ENCODE measurements at regions of chr11 and their contacts with region 1.

Region 1: GRCh38 chr11:67082035-67082791 is 25.6 kb downstream of the RHOD start:
- DNase-seq: no peak
- H3K4me3 ChIP-seq: peak overlapping the region in 1 of 4 donors; percentile 25
- H3K27ac ChIP-seq: no peak overlapping the region
- H3K4me1 ChIP-seq: peaks cover 8 to 13% (median 10%) of the 10 kb centered on the region in 4 donors
- H3K27me3 ChIP-seq: peaks cover 0 to 15% (median 0%) of the 10 kb centered on the region in 4 donors
- CTCF ChIP-seq: no peak
- EP300 ChIP-seq: no peak
- POLR2A ChIP-seq: no peak

Region 2: DNA sequence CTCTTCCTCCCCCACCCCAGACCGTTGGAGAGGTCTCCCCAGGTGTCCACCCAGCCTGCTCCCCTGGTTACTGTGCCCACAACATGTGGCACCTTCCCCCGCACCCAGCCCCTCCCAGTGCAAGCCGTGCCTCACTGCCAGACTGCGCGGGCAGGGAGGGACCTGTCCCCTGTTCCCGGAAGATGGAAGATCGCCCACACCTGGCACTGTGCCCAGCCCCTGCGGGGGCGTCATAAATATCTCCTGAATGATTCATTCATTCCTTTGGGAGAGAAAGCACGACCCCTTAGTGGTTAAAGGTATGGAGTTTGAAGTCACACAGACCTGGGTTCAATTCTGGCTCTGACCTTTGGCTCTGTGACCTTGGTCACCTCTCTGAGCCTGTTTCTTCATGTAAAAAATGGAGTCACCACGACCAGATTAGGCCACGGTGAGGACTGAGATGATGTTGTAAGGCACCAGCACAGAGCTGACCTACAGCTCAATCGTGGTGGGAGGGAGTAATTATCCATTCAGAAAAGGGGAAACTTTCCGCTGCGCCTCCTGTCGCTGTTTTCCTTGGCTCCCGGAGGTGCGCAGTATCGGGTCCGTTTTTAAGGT is 59.8 kb before region 1 on chr11:
- intact Hi-C with region 1: no loop called
- DNase-seq: no peak
- H3K4me3 ChIP-seq: peak overlapping the region; percentile 47 to 58 (median 50)
- H3K27ac ChIP-seq: no peak overlapping the region
- H3K4me1 ChIP-seq: peaks cover 13 to 20% (median 19%) of the 10 kb centered on the region in 4 donors
- H3K27me3 ChIP-seq: peaks cover 0 to 40% (median 12%) of the 10 kb centered on the region in 4 donors
- CTCF ChIP-seq: no peak
- EP300 ChIP-seq: no peak
- POLR2A ChIP-seq: no peak

Region 3: DNA sequence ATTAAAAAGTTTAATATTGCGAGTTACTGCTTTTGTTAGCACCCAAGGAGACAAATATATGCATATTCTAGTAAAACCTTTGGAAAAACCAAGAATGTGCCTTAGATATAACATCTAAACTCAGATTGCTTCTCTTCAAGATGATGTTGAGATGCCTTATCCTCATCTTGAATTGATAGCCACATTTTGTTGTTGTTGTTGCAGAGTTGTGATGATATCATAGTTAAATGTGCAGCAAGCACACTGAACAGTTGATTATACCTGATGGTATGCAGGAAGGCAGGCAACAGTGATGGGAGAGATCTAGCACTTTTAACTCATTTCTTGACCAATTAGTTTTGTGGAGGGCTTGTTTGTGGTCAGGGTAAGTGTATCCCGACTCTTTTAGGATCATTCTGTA is 84.9 kb after region 1 on chr11:
- intact Hi-C with region 1: loop called (anchors 5 kb)
- DNase-seq: no peak
- H3K4me3 ChIP-seq: no peak overlapping the region
- H3K27ac ChIP-seq: no peak overlapping the region
- H3K4me1 ChIP-seq: peaks cover 6 to 68% (median 51%) of the 10 kb centered on the region in 4 donors
- H3K27me3 ChIP-seq: no peaks in the 10 kb centered on the region
- CTCF ChIP-seq: no peak
- EP300 ChIP-seq: no peak
- POLR2A ChIP-seq: no peak

Measured in esophagus muscularis mucosa (tissue), 4 donors.